T-cell (primary cell): ENCODE measurements at regions of chr17 and their contacts with region 1.

Region 1: DNA sequence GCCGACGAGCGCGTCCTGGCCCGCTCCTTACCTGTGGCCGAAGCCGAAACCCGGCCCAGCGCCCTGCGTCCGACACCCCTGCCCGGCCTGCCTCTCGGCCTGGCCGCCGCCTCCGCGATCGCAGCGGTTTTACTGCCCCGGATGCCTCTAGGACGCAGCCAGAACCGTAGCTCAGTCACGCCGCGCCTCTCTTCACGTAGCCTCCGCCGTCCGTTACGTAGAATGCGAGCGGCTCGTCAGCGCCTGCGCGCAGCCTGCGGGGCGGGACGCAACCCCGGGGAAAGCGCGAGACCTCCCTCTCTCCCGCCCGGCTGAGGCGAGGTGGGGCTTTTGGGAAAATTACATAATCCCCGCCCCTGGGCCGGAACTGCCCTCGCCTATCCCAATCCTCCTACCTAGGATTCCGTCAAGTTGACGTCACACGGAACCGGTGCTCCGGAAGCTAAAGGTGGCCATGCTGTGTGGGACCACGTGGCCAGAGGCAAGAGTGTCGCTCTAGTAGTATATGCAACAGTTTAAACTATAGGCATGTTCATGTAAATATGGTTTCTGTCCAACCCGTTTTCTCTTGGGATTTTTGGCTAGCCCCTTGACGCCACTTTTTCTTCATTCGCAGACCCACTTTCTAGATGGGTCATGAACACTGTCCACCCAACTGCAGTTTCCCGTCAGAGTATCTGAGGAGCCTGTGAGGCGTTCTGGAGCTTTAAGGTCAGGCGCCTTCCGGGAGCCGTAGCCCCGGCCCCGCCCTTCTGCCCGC is at the start of gene CCDC47:
- DNase-seq: peak; percentile 93 to 99 (median 97)
- ATAC-seq: peak; percentile 81 to 88 (median 82)
- H3K4me3 ChIP-seq: peak within 1 kb of the TSS; percentile 68 to 91
- H3K4me3 Mint-ChIP-seq: peak within 1 kb of the TSS; percentile 92 to 97 (median 97)
- H3K27ac ChIP-seq: peak within 1 kb of the TSS; percentile 86
- H3K27ac Mint-ChIP-seq: peak within 1 kb of the TSS; percentile 99
- H3K4me1 ChIP-seq: peaks cover 27 to 36% of the 10 kb centered on the region in 2 experiments
- H3K4me1 Mint-ChIP-seq: peaks cover 66 to 74% (median 73%) of the 10 kb centered on the region in 3 donors
- H3K27me3 ChIP-seq: no peaks in the 10 kb centered on the region
- H3K27me3 Mint-ChIP-seq: no peaks in the 10 kb centered on the region
- total RNA-seq, gene CCDC47: 25.4 to 37.0 (median 33.0) TPM

Region 2: GRCh38 chr17:63741221-63742049 is 32.1 kb before region 1 on chr17 and contains the start of gene STRADA:
- CTCF ChIA-PET with region 1: interaction called in 1 of 2 experiments, 8 read pairs
- POLR2A ChIA-PET with region 1: interaction called, 4 to 10 read pairs
- DNase-seq: peak; percentile 97 to 99 (median 99)
- ATAC-seq: peak; percentile 88 to 94 (median 91)
- H3K4me3 ChIP-seq: peak within 1 kb of the TSS; percentile 95 to 99
- H3K4me3 Mint-ChIP-seq: peak within 1 kb of the TSS; percentile 92 to 95 (median 94)
- H3K27ac ChIP-seq: peak within 1 kb of the TSS; percentile 88
- H3K27ac Mint-ChIP-seq: peak within 1 kb of the TSS; percentile 86 to 96
- H3K4me1 ChIP-seq: peaks cover 6 to 25% of the 10 kb centered on the region in 2 experiments
- H3K4me1 Mint-ChIP-seq: peaks cover 19 to 26% (median 26%) of the 10 kb centered on the region in 3 donors
- H3K27me3 ChIP-seq: no peaks in the 10 kb centered on the region
- H3K27me3 Mint-ChIP-seq: no peaks in the 10 kb centered on the region
- total RNA-seq, gene STRADA: 46.9 to 58.8 (median 48.6) TPM

Region 3: GRCh38 chr17:63792055-63792725 is 18.6 kb after region 1 on chr17:
- CTCF ChIA-PET with region 1: no interaction called
- POLR2A ChIA-PET with region 1: no interaction called
- DNase-seq: no peak
- ATAC-seq: no peak
- H3K4me3 ChIP-seq: no peak overlapping the region
- H3K4me3 Mint-ChIP-seq: no peak overlapping the region
- H3K27ac ChIP-seq: no peak overlapping the region
- H3K27ac Mint-ChIP-seq: no peak overlapping the region
- H3K4me1 ChIP-seq: no peaks in the 10 kb centered on the region
- H3K4me1 Mint-ChIP-seq: peaks cover 0 to 4% (median 2%) of the 10 kb centered on the region in 3 donors
- H3K27me3 ChIP-seq: no peaks in the 10 kb centered on the region
- H3K27me3 Mint-ChIP-seq: no peaks in the 10 kb centered on the region

Region 4: DNA sequence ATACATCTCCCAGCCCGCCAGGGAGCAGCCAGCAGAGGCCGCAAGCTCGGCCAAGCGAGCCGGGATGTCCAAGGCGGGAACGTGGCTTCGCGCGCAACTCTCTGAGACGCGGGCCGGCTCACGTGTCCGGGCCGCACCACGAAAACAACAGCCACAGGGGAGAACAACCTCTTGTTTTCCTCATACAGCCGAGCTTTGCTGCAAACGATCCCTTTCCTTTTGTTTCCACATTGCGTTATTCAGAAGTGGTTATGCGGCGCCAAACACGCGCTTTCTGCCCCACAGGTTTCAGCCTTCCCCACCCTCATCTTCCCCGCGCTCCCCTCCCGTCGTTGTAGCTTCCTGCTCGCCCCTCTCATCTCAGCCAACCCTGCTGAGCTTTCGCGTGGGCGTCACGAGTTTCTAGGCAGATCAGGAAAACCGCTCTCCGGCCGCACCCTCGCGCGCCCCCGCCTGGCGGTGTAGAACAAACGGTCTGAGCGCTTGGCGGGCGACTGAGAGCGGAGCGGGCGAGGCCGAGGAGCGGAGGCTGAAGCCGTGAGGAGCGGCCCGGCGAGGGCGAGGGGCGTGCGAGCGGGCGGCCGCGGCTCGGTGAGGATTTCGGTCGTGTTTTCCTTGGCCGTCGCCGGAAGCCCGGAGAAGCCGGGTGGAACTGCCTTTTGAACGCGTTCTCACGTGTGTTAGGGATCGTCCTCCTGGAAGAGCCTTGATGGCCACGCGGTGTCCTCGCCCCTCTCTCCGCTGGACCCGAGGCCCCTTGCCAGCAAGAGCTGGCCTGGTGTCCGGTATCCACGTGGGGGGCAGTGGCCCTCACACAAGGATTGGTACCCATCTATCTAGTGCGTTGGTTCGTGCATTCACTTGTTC is 75.5 kb after region 1 on chr17:
- CTCF ChIA-PET with region 1: interaction called in 1 of 2 experiments, 12 read pairs
- POLR2A ChIA-PET with region 1: no interaction called
- DNase-seq: peak; percentile 84 to 97 (median 91)
- ATAC-seq: peak; percentile 96 to 98 (median 97)
- H3K4me3 ChIP-seq: peak overlapping the region; percentile 33 to 56
- H3K4me3 Mint-ChIP-seq: peak overlapping the region; percentile 69 to 78 (median 75)
- H3K27ac ChIP-seq: peak overlapping the region; percentile 58
- H3K27ac Mint-ChIP-seq: peak overlapping the region; percentile 86 to 94
- H3K4me1 ChIP-seq: peaks cover 0 to 21% of the 10 kb centered on the region in 2 experiments
- H3K4me1 Mint-ChIP-seq: peaks cover 17 to 22% (median 17%) of the 10 kb centered on the region in 3 donors
- H3K27me3 ChIP-seq: no peaks in the 10 kb centered on the region
- H3K27me3 Mint-ChIP-seq: no peaks in the 10 kb centered on the region

Region 5: DNA sequence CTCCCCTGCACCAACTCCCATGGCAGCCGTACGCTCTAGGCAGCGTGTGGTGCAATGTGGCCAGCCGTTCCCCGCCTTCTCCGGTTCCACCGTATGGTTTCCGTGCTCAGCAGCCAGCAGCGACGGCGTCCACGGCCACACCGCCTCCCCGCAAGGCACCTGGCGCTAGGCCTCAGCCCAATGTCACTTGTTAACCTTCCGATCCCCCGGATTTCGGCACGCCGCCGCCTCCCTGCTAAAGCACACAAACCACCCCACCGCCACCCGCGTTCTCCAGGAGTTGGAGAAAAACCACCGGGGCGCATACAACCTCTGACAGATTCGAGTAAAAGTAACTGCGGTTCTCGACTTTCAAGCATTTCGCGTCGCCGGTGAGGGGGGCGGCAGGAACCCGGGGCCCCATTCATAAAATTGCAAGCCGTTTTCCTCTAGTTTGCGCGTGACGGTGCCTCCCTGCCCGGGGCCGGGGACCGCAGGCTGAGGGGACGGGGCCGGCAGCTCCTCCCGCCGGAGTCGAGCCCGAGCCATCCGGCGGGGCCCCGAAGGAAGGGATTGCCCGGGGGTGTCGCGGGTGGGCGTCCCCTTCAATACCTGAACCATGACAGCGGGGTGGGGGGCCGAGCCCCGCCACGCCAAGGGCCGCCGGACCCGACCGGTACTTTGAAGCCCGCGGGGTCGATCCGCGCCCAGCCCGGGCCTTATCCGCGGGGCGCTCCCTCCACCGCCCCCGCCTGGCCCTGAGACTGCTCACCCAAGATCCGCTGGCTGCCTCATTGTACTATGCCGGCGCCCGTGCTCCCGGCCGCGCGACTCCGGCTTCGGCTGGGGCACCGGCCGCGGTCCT is 489.1 kb after region 1 on chr17 and contains the start of gene TEX2:
- CTCF ChIA-PET with region 1: no interaction called
- POLR2A ChIA-PET with region 1: no interaction called
- DNase-seq: peak; percentile 39 to 81 (median 73)
- ATAC-seq: peak; percentile 52 to 58 (median 56)
- H3K4me3 ChIP-seq: peak within 1 kb of the TSS; percentile 76 to 82
- H3K4me3 Mint-ChIP-seq: peak within 1 kb of the TSS; percentile 91 to 96 (median 93)
- H3K27ac ChIP-seq: peak within 1 kb of the TSS; percentile 67
- H3K27ac Mint-ChIP-seq: peak within 1 kb of the TSS; percentile 84 to 96
- H3K4me1 ChIP-seq: peaks cover 15 to 23% of the 10 kb centered on the region in 2 experiments
- H3K4me1 Mint-ChIP-seq: peaks cover 34 to 42% (median 37%) of the 10 kb centered on the region in 3 donors
- H3K27me3 ChIP-seq: peaks cover 0 to 13% of the 10 kb centered on the region in 2 experiments
- H3K27me3 Mint-ChIP-seq: peaks cover 0 to 4% of the 10 kb centered on the region in 2 donors
- total RNA-seq, gene TEX2: 12.5 to 16.4 (median 14.8) TPM

Region 6: GRCh38 chr17:64506576-64507477 is 733.3 kb after region 1 on chr17 and contains the start of gene CEP95:
- CTCF ChIA-PET with region 1: no interaction called
- POLR2A ChIA-PET with region 1: interaction called, 3 to 12 read pairs
- DNase-seq: peak in 34 of 35 experiments; percentile 90 to 98 (median 95)
- ATAC-seq: peak; percentile 63 to 76 (median 69)
- H3K4me3 ChIP-seq: peak within 1 kb of the TSS; percentile 91 to 99
- H3K4me3 Mint-ChIP-seq: peak within 1 kb of the TSS; percentile 97 to 100 (median 100)
- H3K27ac ChIP-seq: peak within 1 kb of the TSS; percentile 99
- H3K27ac Mint-ChIP-seq: peak within 1 kb of the TSS; percentile 99 to 100
- H3K4me1 ChIP-seq: peaks cover 19 to 34% of the 10 kb centered on the region in 2 experiments
- H3K4me1 Mint-ChIP-seq: peaks cover 62 to 72% (median 62%) of the 10 kb centered on the region in 3 donors
- H3K27me3 ChIP-seq: no peaks in the 10 kb centered on the region
- H3K27me3 Mint-ChIP-seq: no peaks in the 10 kb centered on the region
- total RNA-seq, gene CEP95: 77.0 to 168 (median 91.9) TPM